Activated naive CD4-positive, alpha-beta T cell treated with anti-CD3 and anti-CD28 coated beads for 36 hours (primary cell): ENCODE measurements at regions of chr6 and their contacts with region 1.

Region 1: GRCh38 chr6:69756366-69756765 is 40.4 kb downstream of the LMBRD1 start:
- DNase-seq: no peak
- H3K4me3 Mint-ChIP-seq: no peak overlapping the region
- H3K27ac Mint-ChIP-seq: no peak overlapping the region
- H3K4me1 Mint-ChIP-seq: peaks cover 27% of the 10 kb centered on the region
- H3K27me3 Mint-ChIP-seq: no peaks in the 10 kb centered on the region

Region 2: GRCh38 chr6:69771158-69771906 is 15.0 kb after region 1 on chr6:
- CTCF ChIA-PET with region 1: no interaction called
- intact Hi-C with region 1: loop called (anchors 2 kb)
- DNase-seq: no peak
- H3K4me3 Mint-ChIP-seq: no peak overlapping the region
- H3K27ac Mint-ChIP-seq: no peak overlapping the region
- H3K4me1 Mint-ChIP-seq: peaks cover 42% of the 10 kb centered on the region
- H3K27me3 Mint-ChIP-seq: no peaks in the 10 kb centered on the region